ENCODE measurements at regions of chr12 and their contacts with region 1.

Region 1: DNA sequence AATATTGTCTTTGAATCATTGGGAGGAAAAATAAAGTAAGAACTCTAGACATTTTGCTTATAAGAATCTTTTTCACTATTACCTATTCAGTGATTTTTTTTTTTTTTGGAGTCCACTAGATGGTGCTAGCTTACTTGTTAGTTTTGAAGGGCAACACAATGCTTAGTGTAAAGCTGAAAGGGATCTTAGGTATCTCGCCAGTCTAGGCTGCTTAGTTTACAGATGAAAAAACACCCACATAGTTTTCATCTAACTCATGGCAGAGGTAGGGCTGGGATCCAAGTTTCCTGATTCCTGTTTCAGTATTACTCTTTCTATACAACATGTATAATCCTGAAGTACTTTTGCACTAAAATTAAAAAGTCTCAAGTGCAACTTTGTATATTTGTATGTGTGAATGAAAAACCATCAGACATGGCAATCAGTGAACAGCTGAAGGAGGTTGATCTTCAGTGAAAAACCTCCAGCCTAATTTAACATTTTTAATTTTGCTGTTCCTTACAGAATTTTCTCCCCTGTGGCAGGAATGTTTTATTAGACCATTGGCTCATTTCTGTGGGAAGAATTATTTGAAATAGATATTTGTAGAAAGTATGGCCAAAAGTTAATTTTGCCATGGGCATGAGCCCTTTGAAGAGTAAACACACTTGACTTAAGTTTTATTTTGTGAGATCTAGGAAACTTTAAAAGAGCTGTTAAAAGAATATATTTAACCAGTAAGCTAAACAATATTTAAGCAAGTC is 40.7 kb downstream of the LRRIQ1 start:
- DNase-seq: peak; percentile 87
- H3K4me3 ChIP-seq: no peak overlapping the region
- H3K27ac ChIP-seq: no peak overlapping the region
- H3K4me1 ChIP-seq: no peaks in the 10 kb centered on the region
- H3K27me3 ChIP-seq: no peaks in the 10 kb centered on the region
- CTCF ChIP-seq: peak; percentile 27 to 33
- POLR2A ChIP-seq: no peak

Region 2: DNA sequence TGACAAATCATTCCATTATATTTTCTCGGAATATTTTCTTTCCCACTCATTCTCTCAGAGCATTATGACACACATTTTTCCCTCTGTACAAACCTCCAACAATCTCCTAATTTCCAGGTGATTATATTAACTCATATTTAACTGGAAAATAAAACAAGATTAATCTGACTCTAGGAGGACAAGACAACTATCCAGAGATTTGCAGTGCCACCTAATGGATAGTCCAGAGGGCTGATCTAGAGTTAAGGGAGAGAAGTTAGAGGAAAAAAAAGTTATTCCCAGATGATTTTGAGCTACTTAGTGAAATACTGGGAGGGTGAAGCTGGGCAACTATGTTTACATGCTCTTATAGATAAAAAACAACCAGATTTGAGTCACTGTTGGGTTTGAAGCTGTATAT is 364.9 kb after region 1 on chr12:
- CTCF ChIA-PET with region 1: interaction called, 13 read pairs
- POLR2A ChIA-PET with region 1: no interaction called
- dilution Hi-C with region 1: no loop called
- intact Hi-C with region 1: no loop called
- DNase-seq: peak; percentile 52
- H3K4me3 ChIP-seq: no peak overlapping the region
- H3K27ac ChIP-seq: no peak overlapping the region
- H3K4me1 ChIP-seq: no peaks in the 10 kb centered on the region
- H3K27me3 ChIP-seq: no peaks in the 10 kb centered on the region
- CTCF ChIP-seq: peak in 1 of 2 donors; percentile 43
- POLR2A ChIP-seq: no peak

Region 3: GRCh38 chr12:85448548-85449139 is 371.8 kb after region 1 on chr12:
- CTCF ChIA-PET with region 1: interaction called, 79 read pairs
- POLR2A ChIA-PET with region 1: interaction called, 3 read pairs
- dilution Hi-C with region 1: no loop called
- intact Hi-C with region 1: loop called (anchors 1 kb)
- DNase-seq: peak; percentile 42
- H3K4me3 ChIP-seq: no peak overlapping the region
- H3K27ac ChIP-seq: no peak overlapping the region
- H3K4me1 ChIP-seq: no peaks in the 10 kb centered on the region
- H3K27me3 ChIP-seq: no peaks in the 10 kb centered on the region
- CTCF ChIP-seq: no peak
- POLR2A ChIP-seq: no peak